Common myeloid progenitor, CD34-positive (primary cell): ENCODE measurements at regions of chr14 and their contacts with region 1.

Region 1: GRCh38 chr14:55160989-55161388 is 30.4 kb downstream of the DLGAP5 start:
- DNase-seq: peak; percentile 45 to 64 (median 61)
- H3K4me3 ChIP-seq: no peak overlapping the region
- H3K27ac ChIP-seq: no peak overlapping the region
- H3K4me1 ChIP-seq: no peaks in the 10 kb centered on the region
- H3K27me3 ChIP-seq: no peaks in the 10 kb centered on the region

Region 2: DNA sequence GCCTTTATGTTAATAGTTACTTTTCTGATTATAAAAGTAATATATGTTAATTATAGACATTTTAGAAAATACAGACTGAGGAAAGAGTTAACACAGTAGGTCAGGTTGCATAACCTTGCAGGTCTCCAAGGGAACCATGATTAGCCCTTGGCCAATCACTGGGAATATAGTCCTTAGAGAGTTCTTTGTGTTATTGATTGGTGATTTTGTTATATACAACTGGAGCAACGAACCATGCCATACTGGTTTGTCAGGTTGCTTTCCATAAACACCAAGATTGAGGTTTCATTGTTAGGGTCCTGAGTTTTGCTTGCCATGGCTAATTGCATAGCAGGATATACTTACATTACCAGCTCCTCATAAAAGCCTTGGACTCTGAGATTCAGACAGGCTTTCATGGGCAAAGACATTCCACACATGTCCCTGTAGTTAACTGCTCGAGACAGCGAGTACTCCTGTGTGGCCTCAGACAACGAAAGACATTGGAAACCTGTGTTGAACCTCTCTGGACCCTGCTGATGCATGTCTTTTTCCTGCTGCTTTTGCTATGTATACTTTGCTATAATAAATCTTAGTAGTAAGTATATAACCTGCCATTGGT is 75.8 kb before region 1 on chr14:
- CTCF ChIA-PET with region 1: interaction called, 75 read pairs
- POLR2A ChIA-PET with region 1: interaction called, 3 read pairs
- DNase-seq: no peak
- H3K4me3 ChIP-seq: no peak overlapping the region
- H3K27ac ChIP-seq: no peak overlapping the region
- H3K4me1 ChIP-seq: no peaks in the 10 kb centered on the region
- H3K27me3 ChIP-seq: no peaks in the 10 kb centered on the region

Region 3: DNA sequence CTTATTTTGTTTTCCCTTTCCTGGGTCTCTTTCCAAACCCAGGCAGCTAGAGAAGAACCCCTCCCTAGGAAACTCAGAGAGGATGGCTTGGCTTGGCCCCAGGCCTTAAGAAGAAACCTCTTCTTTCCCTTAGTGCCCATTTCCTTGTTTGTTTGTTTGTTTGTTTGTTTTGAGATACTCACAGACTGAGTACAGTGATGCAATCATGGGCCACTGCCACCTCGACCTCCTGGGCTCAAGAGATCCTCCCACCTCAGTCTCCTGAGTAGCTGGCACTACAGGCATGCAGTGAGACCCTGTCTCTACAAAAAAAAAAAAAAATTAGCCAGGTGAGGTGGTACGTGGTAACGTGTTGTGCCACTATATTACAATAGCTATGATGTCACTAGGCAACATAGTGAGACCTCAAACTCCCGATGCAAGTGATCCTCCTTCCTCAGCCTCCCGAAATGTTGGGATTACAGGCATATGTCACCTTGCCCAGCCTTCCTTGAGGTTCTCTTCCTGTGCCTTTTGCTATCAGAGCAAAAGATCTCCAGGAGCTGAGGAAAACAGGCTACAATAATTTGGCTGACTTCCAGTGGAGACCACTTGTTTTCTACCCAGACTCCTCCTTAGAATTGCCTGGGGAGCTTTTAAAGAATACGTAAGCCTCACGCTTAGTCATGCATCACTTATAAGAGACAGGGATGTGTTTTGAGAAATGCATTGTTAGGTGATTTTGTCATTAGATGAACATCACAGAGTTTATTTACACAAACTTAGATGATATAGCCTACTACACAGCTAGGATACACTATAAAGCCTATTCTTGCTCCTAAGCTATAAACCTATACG is 66.5 kb before region 1 on chr14:
- CTCF ChIA-PET with region 1: interaction called, 75 read pairs
- POLR2A ChIA-PET with region 1: interaction called, 3 read pairs
- DNase-seq: no peak
- H3K4me3 ChIP-seq: no peak overlapping the region
- H3K27ac ChIP-seq: no peak overlapping the region
- H3K4me1 ChIP-seq: peaks cover 0 to 7% (median 4%) of the 10 kb centered on the region in 4 experiments
- H3K27me3 ChIP-seq: no peaks in the 10 kb centered on the region

Region 4: GRCh38 chr14:55102141-55102621 is 58.8 kb before region 1 on chr14:
- CTCF ChIA-PET with region 1: interaction called, 14 read pairs
- POLR2A ChIA-PET with region 1: interaction called, 3 read pairs
- DNase-seq: peak; percentile 80 to 96 (median 92)
- H3K4me3 ChIP-seq: no peak overlapping the region
- H3K27ac ChIP-seq: peak overlapping the region in 1 of 2 experiments; percentile 72
- H3K4me1 ChIP-seq: peaks cover 16 to 43% (median 29%) of the 10 kb centered on the region in 4 experiments
- H3K27me3 ChIP-seq: no peaks in the 10 kb centered on the region